Endothelial cell of umbilical vein (primary cell): ENCODE measurements at regions of chr7 and their contacts with region 1.

Region 1: DNA sequence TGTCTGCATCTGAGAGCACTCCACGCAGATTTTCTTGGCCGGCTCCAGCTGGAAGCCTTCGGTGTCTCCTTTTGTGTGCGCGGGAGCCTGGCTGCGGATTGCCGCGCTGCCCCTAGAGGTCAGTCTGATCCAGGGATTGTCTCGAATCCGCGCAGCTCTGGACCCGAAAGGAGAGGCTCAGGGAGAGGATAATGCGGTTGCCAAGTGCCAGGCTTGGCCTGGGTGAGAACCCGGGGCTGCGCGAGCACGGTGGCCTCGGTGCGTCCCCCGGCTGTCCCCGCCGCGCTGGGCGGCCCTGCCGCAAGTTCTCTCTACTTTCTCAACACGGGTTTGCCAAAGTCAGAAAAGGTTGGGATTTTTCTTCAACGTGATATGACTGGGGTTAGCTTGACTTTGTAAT is 140.9 kb downstream of the ADCYAP1R1 start:
- DNase-seq: peak; percentile 36
- H3K4me3 ChIP-seq: no peak overlapping the region
- H3K27ac ChIP-seq: no peak overlapping the region
- H3K4me1 ChIP-seq: no peaks in the 10 kb centered on the region
- H3K27me3 ChIP-seq: peaks cover 1 to 4% of the 10 kb centered on the region in 2 experiments
- CTCF ChIP-seq: peak; percentile 62 to 80
- POLR2A ChIP-seq: no peak

Region 2: DNA sequence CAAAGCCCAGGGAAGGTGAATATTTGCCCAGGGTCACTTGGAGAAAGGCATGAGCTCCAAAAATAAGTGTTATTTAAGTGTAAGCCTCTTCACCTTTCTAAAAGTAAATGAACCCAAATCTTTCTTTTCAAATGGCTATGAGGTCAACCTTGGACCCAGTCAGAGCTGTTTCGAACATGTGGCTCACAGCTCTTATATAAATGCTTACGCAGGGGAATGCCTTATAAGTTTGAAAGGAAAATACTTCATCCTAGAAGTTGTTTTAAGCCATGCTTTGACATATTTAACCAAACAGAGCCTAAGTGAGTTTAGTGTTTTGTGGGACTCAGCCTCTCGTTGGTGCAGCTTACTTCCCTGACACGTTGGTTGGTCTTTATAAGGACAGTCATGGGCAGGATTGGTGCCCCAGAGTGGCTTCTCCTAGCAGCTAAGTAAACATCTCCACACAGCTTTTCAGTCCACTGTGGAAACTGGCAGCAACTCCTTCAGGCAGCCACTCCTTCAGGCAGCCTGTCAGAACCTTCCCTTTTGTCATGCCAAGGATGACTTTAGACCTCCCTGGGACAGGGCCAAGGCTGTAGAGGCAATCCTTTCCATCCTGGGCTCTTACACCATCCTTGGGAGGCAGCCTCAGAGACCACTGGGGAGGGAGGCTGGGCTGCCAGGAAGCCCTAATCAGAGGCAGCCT is 378.1 kb before region 1 on chr7:
- CTCF ChIA-PET with region 1: no interaction called
- POLR2A ChIA-PET with region 1: no interaction called
- dilution Hi-C with region 1: no loop called
- intact Hi-C with region 1: no loop called
- DNase-seq: no peak
- H3K4me3 ChIP-seq: no peak overlapping the region
- H3K27ac ChIP-seq: no peak overlapping the region
- H3K4me1 ChIP-seq: no peaks in the 10 kb centered on the region
- H3K27me3 ChIP-seq: peaks cover 0 to 2% of the 10 kb centered on the region in 2 experiments
- CTCF ChIP-seq: no peak
- POLR2A ChIP-seq: no peak

Region 3: GRCh38 chr7:31488562-31489203 is 295.7 kb after region 1 on chr7:
- CTCF ChIA-PET with region 1: interaction called, 6 read pairs
- POLR2A ChIA-PET with region 1: no interaction called
- dilution Hi-C with region 1: no loop called
- intact Hi-C with region 1: loop called (anchors 1 kb)
- DNase-seq: peak; percentile 29
- H3K4me3 ChIP-seq: no peak overlapping the region
- H3K27ac ChIP-seq: no peak overlapping the region
- H3K4me1 ChIP-seq: no peaks in the 10 kb centered on the region
- H3K27me3 ChIP-seq: no peaks in the 10 kb centered on the region
- CTCF ChIP-seq: peak; percentile 58 to 78
- POLR2A ChIP-seq: no peak

Region 4: DNA sequence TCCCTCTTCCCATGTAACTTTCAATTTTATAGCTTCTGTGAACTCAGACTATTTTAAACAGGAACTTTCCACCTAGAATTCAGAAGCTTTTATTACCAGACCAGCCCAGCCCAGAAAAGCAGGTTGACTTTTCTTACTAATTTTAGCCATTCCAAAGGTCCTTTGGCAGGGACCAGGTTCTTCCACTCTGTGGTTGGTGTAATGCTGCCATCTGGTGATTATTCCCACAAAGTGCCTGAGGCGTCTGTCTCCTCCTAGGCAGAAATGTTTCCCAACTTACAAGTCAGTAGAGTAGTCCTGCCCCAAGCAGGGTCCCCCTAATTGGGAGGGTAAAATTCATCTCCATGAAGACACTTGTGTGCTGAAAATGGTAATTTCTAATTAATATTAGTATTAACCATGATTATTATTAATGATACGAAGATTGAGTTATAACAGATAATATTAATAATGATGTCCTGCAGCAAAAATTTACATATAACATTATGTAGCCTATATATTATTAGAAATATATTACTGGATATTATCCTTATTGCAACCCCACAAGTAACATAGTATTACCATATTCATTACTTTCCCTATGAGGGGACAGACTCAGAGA is 441.0 kb after region 1 on chr7:
- CTCF ChIA-PET with region 1: interaction called, 9 read pairs
- POLR2A ChIA-PET with region 1: no interaction called
- dilution Hi-C with region 1: no loop called
- intact Hi-C with region 1: loop called (anchors 5 kb)
- DNase-seq: peak; percentile 44
- H3K4me3 ChIP-seq: no peak overlapping the region
- H3K27ac ChIP-seq: no peak overlapping the region
- H3K4me1 ChIP-seq: no peaks in the 10 kb centered on the region
- H3K27me3 ChIP-seq: no peaks in the 10 kb centered on the region
- CTCF ChIP-seq: peak; percentile 26 to 43
- POLR2A ChIP-seq: no peak